ENCODE measurements at regions of chr17 and their contacts with region 1.

Region 1: DNA sequence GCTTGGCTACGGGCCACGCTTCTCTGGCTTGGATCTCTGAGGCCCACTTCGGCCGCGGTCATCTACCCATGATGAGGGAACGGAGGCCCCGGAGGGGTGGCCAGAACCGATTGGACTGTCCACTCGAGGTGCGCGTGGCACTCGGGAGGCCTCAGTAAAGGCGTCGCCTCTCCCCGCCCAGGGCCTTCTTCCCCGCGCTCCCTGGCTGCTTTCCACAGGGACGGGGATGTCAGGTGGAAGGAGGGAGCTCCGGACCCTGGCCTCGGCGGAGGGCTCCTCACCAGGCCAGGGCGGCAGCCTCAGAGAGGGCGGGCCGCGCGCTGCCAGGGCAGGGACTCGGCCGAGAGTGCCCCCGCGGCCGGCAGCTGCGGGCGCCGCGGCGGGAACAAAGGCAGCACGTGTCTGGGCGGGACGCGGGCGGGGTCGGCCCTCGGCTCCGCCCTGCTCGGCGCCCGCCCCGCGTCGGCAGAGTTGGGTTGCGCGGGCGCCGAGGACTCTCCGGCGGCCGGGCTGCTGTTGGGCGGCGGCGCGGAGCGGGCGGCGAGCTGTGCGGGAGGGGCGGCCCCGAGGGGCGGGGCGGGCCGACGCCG is 587 bp upstream of the CDK5R1 start:
- DNase-seq: peak; percentile 62 to 93 (median 81)
- H3K4me3 ChIP-seq: peak overlapping the region; percentile 24 to 83 (median 62)
- H3K27ac ChIP-seq: peak overlapping the region; percentile 71 to 99 (median 97)
- H3K27me3 ChIP-seq: no peaks in the 10 kb centered on the region
- CTCF ChIP-seq: peak in 13 of 56 donors; percentile 9 to 50 (median 15)

Region 2: GRCh38 chr17:32546031-32546444 is 59.8 kb after region 1 on chr17:
- intact Hi-C with region 1: loop called in 1 of 2 experiments (anchors 5 kb)
- DNase-seq: peak; percentile 58 to 83 (median 72)
- H3K4me3 ChIP-seq: peak overlapping the region in 33 of 59 donors; percentile 0 to 49 (median 25)
- H3K27ac ChIP-seq: peak overlapping the region in 58 of 59 donors; percentile 30 to 90 (median 76)
- H3K27me3 ChIP-seq: no peaks in the 10 kb centered on the region
- CTCF ChIP-seq: peak in 5 of 56 donors; percentile 14 to 31 (median 23)

Region 3: GRCh38 chr17:32604966-32605365 is 118.8 kb after region 1 on chr17:
- intact Hi-C with region 1: no loop called
- DNase-seq: no peak
- H3K4me3 ChIP-seq: no peak overlapping the region
- H3K27ac ChIP-seq: peak overlapping the region in 2 of 59 donors; percentile 21 to 30
- H3K27me3 ChIP-seq: no peaks in the 10 kb centered on the region
- CTCF ChIP-seq: no peak

Region 4: DNA sequence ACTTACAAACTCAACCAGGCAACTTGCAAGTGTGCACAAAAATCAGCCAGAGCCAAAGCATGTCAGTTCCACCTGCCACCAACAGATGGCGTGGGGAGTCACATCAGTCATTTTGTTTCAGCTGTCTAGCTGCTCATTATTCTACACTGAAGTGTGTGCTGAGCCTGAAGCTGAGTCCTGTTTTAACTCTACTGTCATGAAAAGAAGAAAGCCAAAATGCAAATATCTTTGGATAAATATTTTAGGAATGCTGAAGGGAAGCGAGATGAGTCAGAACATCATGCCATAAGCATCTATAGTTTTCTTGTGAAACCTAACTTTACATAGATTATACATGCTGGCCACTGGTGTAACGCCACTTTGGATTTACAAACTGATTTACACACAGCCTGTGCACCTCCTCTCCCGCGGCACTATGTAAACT is 173.2 kb after region 1 on chr17:
- intact Hi-C with region 1: loop called (anchors 2 kb)
- DNase-seq: peak; percentile 71 to 95 (median 86)
- H3K4me3 ChIP-seq: peak overlapping the region in 1 of 59 donors; percentile 22
- H3K27ac ChIP-seq: peak overlapping the region in 56 of 59 donors; percentile 45 to 88 (median 73)
- H3K27me3 ChIP-seq: no peaks in the 10 kb centered on the region
- CTCF ChIP-seq: peak; percentile 88 to 99 (median 96)

Region 5: GRCh38 chr17:32755045-32755805 is 269.0 kb after region 1 on chr17:
- intact Hi-C with region 1: loop called (anchors 1 to 5 kb)
- DNase-seq: peak in 2 of 10 donors; percentile 23 to 35
- H3K4me3 ChIP-seq: peak overlapping the region in 6 of 59 donors; percentile 4 to 31 (median 14)
- H3K27ac ChIP-seq: peak overlapping the region; percentile 44 to 95 (median 85)
- H3K27me3 ChIP-seq: no peaks in the 10 kb centered on the region
- CTCF ChIP-seq: peak; percentile 58 to 94 (median 80)

Region 6: GRCh38 chr17:32877164-32877764 is 391.1 kb after region 1 on chr17:
- intact Hi-C with region 1: loop called (anchors 2 kb)
- DNase-seq: peak; percentile 61 to 92 (median 84)
- H3K4me3 ChIP-seq: peak overlapping the region in 58 of 59 donors; percentile 51 to 91 (median 82)
- H3K27ac ChIP-seq: peak overlapping the region in 52 of 59 donors; percentile 29 to 97 (median 87)
- H3K27me3 ChIP-seq: no peaks in the 10 kb centered on the region
- CTCF ChIP-seq: peak; percentile 34 to 95 (median 82)

Measured in dorsolateral prefrontal cortex (tissue), 120 donors.